Stomach (tissue), 19 donors: ENCODE measurements at regions of chr9 and their contacts with region 1.

Region 1: GRCh38 chr9:127224178-127224882 is 40.2 kb upstream of the GARNL3 start:
- DNase-seq: peak; percentile 94 to 95
- H3K4me3 ChIP-seq: peak overlapping the region; percentile 66 to 88 (median 82)
- H3K27ac ChIP-seq: peak overlapping the region; percentile 59 to 87 (median 82)
- H3K4me1 ChIP-seq: peaks cover 13 to 30% (median 22%) of the 10 kb centered on the region in 4 donors
- H3K27me3 ChIP-seq: no peaks in the 10 kb centered on the region
- CTCF ChIP-seq: no peak
- EP300 ChIP-seq: no peak
- POLR2A ChIP-seq: no peak

Region 2: DNA sequence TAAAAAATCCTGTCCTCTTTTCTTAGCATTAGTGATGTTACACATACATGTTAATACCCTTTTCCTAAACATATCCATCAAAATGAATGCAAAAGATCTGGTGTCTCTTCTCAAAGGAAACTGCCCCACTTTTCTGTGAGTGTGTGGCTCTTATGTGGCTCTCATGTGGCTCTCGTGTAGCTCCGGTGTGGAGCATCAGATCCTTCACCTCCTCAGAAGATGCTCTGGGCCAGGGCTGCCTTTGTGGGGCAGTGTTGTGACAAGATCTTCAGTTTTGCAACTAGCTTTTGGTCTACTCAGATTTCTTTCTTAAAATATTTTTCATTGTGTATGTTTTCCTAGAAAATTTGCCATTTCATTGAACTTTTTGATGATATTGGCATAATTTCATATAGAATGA is 59.6 kb after region 1 on chr9:
- intact Hi-C with region 1: no loop called
- DNase-seq: peak in 1 of 2 donors; percentile 46
- H3K4me3 ChIP-seq: no peak overlapping the region
- H3K27ac ChIP-seq: no peak overlapping the region
- H3K4me1 ChIP-seq: peaks cover 0 to 15% (median 0%) of the 10 kb centered on the region in 4 donors
- H3K27me3 ChIP-seq: no peaks in the 10 kb centered on the region
- CTCF ChIP-seq: no peak
- EP300 ChIP-seq: no peak
- POLR2A ChIP-seq: no peak

Region 3: DNA sequence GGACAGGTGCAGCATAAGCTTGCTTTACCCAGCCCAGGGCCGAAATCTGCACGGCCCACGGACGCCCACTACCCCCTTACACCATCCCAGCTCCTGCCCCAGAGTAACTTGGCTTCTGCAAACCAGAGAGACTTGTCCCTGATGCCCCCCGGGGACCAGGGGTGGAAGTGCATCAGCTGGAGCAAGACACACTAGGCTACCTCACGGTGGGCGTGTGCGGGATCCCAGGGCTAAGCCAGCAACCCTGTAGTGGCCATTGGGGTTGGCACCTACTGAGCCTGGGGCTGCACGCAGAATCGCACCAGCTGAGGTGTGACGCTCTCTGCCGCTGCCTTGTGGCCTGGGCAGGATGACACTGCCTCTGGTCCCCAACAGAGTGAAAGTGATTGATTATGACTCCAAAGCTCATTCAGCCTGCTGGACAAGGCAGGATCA is 193.7 kb after region 1 on chr9:
- intact Hi-C with region 1: loop called (anchors 10 kb)
- DNase-seq: peak in 1 of 2 donors; percentile 53
- H3K4me3 ChIP-seq: no peak overlapping the region
- H3K27ac ChIP-seq: peak overlapping the region in 1 of 5 donors; percentile 71
- H3K4me1 ChIP-seq: peaks cover 15 to 68% (median 24%) of the 10 kb centered on the region in 4 donors
- H3K27me3 ChIP-seq: no peaks in the 10 kb centered on the region
- CTCF ChIP-seq: no peak
- EP300 ChIP-seq: no peak
- POLR2A ChIP-seq: no peak